Astrocyte of the cerebellum (primary cell): ENCODE measurements at regions of chr11 and their contacts with region 1.

Region 1: DNA sequence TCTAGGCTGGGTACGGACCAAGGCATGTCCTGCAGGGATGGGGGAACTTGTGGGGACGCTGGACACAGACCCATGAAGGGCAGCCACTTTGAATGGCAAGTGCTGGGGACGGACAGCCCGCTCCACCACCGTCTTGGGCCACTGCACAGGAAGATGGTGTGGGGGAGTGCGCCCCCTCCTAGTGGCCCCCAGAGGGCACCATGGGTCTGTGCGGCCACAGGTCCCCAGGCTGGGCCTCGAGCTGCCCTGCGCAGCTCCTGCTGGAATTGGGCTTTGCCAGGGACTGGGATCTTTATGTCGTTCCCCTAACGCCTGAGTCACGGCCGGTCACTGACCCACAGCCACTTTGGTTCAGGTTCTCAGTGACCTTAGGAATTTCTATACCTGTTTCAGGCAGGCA is 44.4 kb downstream of the NAT10 start:
- DNase-seq: no peak
- H3K4me3 ChIP-seq: no peak overlapping the region
- CTCF ChIP-seq: peak; percentile 52

Region 2: DNA sequence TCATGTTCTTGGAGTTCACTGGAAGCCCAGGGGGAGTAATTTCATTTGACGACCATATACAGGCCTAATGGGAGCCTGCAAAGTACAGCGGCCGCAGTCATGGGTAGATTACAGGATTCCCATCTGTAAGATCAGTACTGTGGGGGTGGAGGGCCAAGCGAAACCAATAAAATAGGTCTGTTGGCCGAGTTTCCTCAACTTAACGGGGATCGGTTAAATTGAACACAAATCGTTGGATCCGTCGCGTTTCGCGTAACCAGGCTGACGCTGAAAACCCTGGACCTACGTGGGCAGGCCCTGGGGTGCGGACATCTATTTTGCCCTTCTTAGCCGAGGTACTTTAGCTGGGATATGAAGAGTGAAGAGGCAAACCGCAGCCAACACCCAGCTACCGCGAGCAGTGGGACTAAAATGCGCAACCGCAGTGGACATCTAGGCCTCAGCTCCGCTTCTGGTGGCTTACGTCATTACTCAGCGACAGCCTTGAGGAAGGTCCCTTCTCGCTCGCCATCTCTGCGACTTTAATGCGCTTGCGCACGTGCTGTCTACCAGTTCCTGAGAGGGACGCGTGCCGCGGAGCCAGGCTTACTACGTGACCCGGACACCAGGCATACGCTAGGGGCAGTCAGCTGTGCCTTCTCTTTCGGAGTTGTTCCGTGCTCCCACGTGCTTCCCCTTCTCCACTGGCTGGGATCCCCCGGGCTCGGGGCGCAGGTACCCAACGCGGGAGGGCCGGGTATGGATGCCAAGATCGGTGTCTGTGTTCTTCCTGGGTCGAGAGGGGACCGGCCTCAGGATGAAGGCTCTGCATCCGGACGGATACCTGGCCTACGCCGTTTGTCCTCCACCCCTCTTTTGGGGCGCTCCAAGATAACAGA is 44.5 kb before region 1 on chr11 and contains the start of gene NAT10:
- in situ Hi-C with region 1: loop called (anchors 5 kb)
- DNase-seq: peak; percentile 98
- H3K4me3 ChIP-seq: peak within 1 kb of the TSS; percentile 88
- CTCF ChIP-seq: peak; percentile 7

Region 3: GRCh38 chr11:34185926-34186841 is 36.4 kb after region 1 on chr11:
- in situ Hi-C with region 1: no loop called
- DNase-seq: no peak
- H3K4me3 ChIP-seq: no peak overlapping the region
- CTCF ChIP-seq: no peak